Activated naive CD4-positive, alpha-beta T cell treated with anti-CD3 and anti-CD28 coated beads for 36 hours (primary cell): ENCODE measurements at regions of chr1 and their contacts with region 1.

Region 1: DNA sequence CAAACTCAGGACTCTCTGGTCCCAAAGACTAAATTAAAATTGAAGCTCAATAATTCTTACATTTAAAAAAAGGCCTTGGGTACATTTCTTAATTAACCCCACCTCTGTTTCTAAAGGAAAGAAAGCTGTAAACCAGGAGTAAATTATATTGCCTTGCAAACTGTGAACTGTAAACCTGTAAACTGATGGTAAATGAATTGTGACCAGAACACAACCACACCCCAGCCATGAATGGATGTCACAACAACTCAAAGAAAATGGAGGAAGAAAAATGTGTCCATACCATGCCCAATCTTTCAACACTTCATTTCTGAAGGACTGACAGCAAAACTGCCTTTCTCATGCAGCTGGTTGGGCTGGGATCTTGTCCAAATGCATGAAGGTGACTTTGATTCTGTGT is 171.3 kb upstream of the C1orf87 start:
- DNase-seq: no peak
- H3K4me3 Mint-ChIP-seq: no peak overlapping the region
- H3K27ac Mint-ChIP-seq: no peak overlapping the region
- H3K4me1 Mint-ChIP-seq: no peaks in the 10 kb centered on the region
- H3K27me3 Mint-ChIP-seq: peaks cover 6% of the 10 kb centered on the region

Region 2: GRCh38 chr1:59526240-59526639 is 718.7 kb before region 1 on chr1:
- CTCF ChIA-PET with region 1: no interaction called
- intact Hi-C with region 1: no loop called
- DNase-seq: no peak
- H3K4me3 Mint-ChIP-seq: no peak overlapping the region
- H3K27ac Mint-ChIP-seq: no peak overlapping the region
- H3K4me1 Mint-ChIP-seq: no peaks in the 10 kb centered on the region
- H3K27me3 Mint-ChIP-seq: no peaks in the 10 kb centered on the region

Region 3: GRCh38 chr1:60171801-60172200 is 73.1 kb before region 1 on chr1:
- CTCF ChIA-PET with region 1: no interaction called
- intact Hi-C with region 1: no loop called
- DNase-seq: no peak
- H3K4me3 Mint-ChIP-seq: no peak overlapping the region
- H3K27ac Mint-ChIP-seq: no peak overlapping the region
- H3K4me1 Mint-ChIP-seq: no peaks in the 10 kb centered on the region
- H3K27me3 Mint-ChIP-seq: peaks cover 2% of the 10 kb centered on the region

Region 4: DNA sequence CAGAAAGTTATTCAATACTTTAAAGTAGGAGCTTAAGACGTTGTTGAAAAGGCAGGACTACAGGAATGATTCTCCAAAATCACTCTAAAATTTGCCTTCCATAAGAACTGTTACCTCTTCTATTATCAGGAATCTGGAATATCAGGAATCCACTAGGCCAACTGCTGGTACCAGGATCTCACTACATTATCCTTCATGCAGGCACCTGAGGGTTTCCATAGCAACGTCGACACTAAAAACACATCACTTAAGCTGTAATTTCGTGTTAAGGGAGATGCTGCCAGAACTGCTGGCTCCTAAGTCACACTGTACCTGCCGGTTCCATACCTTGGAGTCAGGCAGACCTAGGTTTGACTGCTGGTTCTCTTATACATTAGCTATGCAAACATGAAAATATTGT is 31.7 kb before region 1 on chr1:
- CTCF ChIA-PET with region 1: no interaction called
- intact Hi-C with region 1: loop called (anchors 1 kb)
- DNase-seq: no peak
- H3K4me3 Mint-ChIP-seq: no peak overlapping the region
- H3K27ac Mint-ChIP-seq: no peak overlapping the region
- H3K4me1 Mint-ChIP-seq: no peaks in the 10 kb centered on the region
- H3K27me3 Mint-ChIP-seq: no peaks in the 10 kb centered on the region

Region 5: DNA sequence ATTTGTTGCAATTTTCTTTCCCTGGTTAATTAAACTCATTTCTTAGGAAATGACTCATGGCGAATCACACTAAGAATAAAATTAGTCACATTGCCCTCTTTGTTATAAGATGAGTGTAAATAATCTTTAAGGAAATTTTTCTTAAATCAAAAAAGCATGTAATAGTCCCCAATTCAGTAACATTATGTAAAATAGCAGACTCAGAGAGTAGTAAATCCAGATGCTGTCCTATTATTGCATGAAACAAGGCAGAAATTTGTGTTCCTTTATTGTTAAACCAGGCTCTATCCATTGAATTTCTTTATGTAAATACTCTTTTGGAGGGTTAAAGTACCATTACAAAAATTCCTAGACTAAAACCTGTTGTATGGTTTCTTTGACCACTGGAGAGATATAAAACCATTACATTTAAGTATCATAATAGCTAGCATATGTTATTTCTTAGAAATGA is 16.8 kb before region 1 on chr1:
- CTCF ChIA-PET with region 1: no interaction called
- intact Hi-C with region 1: no loop called
- DNase-seq: no peak
- H3K4me3 Mint-ChIP-seq: no peak overlapping the region
- H3K27ac Mint-ChIP-seq: no peak overlapping the region
- H3K4me1 Mint-ChIP-seq: peaks cover 3% of the 10 kb centered on the region
- H3K27me3 Mint-ChIP-seq: peaks cover 3% of the 10 kb centered on the region